Posterior vena cava (tissue), 2 donors: ENCODE measurements at regions of chr16 and their contacts with region 1.

Region 1: DNA sequence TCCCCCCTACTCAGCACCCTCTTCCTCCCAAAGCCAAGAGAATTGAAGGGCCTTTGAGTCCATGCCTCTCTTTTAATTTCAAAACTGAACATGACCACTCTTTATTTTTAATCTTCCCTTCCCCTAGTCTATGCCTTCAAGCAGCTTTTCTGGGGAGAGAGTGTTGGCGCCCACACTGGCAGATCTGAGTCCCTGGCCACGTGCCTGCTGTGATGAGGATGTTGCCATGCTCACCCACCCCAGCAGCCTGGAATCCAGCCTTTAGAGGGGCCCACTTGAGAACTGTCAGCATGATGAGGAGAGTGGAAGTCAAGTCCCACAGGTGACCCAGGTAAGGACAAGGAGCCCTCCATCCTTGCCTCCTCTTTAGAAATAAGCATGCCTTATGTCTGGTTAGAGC is 20.3 kb upstream of the CACNG3 start:
- DNase-seq: no peak

Region 2: DNA sequence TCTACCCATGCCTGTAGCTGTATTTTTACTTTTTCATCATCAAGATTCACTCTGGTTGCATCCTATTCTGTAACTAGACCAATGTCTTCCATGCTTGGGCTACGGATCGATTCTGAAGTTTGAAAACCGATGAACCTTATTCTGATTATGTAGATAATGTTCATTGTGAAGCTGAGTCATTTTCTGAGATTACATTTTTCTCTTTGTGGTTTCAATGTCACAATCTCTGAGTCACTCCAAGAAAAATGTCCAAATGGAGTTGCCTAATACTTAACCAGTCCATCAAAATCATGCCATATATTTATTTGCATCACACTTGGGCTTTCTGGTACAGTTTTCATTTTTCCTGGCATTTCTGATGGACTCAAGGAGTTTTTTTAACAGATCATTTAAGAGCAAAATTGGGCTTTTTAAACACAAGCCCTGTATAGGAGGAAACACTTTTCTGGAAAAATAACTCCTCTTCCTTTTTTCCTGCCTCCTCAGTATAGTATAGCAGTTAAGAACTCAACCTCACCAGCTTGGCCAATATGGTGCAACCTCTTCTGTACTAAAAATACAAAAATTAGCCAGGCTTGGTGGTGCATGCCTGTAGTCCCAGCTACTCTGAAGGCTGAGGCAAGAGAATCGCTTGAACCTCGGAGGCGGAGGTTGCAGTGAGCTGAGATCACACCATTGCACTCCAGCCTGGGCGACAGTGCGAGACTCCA is 37.8 kb after region 1 on chr16:
- intact Hi-C with region 1: no loop called
- DNase-seq: no peak

Region 3: GRCh38 chr16:24291932-24292331 is 56.1 kb after region 1 on chr16:
- intact Hi-C with region 1: loop called in 1 of 2 experiments (anchors 10 kb)
- DNase-seq: no peak